ENCODE measurements at regions of chr2 and their contacts with region 1.

Region 1: DNA sequence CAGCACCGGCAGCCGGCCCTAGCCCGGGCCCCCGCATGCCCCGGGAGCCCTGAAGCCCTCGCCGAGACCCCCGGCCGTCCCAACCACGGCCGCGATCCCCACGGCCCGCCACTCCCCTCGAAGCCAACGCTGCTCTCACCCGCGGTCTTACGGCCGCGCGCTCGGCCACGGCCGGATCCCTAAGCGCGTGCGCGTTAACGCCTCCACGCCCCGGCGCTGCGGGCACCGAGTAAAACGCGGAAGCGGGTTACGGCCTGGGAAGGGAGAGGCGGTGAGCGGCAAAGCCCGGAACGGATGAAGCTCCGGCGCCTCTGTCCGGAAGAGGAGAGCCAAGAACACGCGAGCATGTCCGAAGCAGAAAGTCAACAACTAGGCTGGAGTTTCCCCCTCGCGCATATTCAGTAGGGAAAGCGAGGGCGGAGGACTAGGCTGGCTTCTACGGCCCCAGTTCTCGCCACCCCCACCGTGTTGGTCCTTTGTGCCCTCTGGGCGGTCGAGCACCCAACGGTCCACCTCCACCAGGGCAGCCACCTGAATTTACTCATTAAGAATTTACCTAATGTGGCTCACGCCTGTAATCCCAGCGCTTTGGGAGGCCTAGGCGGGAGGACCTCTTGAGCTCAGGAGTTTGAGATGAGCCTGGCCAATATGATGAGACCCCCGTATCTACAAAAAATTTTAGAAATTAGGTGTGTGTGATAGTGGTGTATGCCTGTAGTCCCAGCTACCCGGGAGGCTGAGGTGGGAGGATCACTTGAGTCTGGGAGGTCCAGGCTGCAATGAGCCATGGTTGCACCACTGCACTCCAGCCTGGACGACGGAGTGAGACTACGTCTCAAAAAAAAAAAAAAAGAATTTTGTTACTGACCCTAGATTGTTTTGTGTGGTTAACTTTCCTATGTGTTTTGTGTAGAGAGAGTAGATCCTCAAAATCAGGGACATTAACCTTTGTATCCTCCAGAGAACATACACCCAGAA is at the start of gene KANSL3:
- DNase-seq: peak; percentile 94 to 95
- ATAC-seq: peak; percentile 82 to 93 (median 87)
- H3K4me3 ChIP-seq: peak within 1 kb of the TSS; percentile 60
- H3K4me3 Mint-ChIP-seq: peak within 1 kb of the TSS; percentile 93
- H3K27ac ChIP-seq: peak within 1 kb of the TSS; percentile 89
- H3K27ac Mint-ChIP-seq: peak within 1 kb of the TSS; percentile 94 to 97
- H3K4me1 ChIP-seq: peaks cover 19% of the 10 kb centered on the region
- H3K4me1 Mint-ChIP-seq: peaks cover 33% of the 10 kb centered on the region in 2 donors
- H3K27me3 ChIP-seq: no peaks in the 10 kb centered on the region
- H3K27me3 Mint-ChIP-seq: peaks cover 0 to 3% of the 10 kb centered on the region in 2 donors
- CTCF ChIP-seq: no peak
- total RNA-seq, gene KANSL3: 73.9 to 98.0 (median 83.5) TPM

Region 2: GRCh38 chr2:96618604-96619283 is 19.7 kb before region 1 on chr2:
- intact Hi-C with region 1: loop called (anchors 1 kb)
- DNase-seq: no peak
- ATAC-seq: peak in 1 of 3 donors; percentile 52
- H3K4me3 ChIP-seq: no peak overlapping the region
- H3K4me3 Mint-ChIP-seq: no peak overlapping the region
- H3K27ac ChIP-seq: no peak overlapping the region
- H3K27ac Mint-ChIP-seq: peak overlapping the region in 1 of 2 donors; percentile 58
- H3K4me1 ChIP-seq: peaks cover 18% of the 10 kb centered on the region
- H3K4me1 Mint-ChIP-seq: peaks cover 44 to 46% of the 10 kb centered on the region in 2 donors
- H3K27me3 ChIP-seq: no peaks in the 10 kb centered on the region
- H3K27me3 Mint-ChIP-seq: no peaks in the 10 kb centered on the region
- CTCF ChIP-seq: no peak

Region 3: GRCh38 chr2:96739633-96740428 is 101.4 kb after region 1 on chr2 and contains the start of gene LMAN2L:
- intact Hi-C with region 1: loop called (anchors 1 kb)
- DNase-seq: peak; percentile 93 to 97
- ATAC-seq: peak; percentile 99 to 100 (median 100)
- H3K4me3 ChIP-seq: peak within 1 kb of the TSS; percentile 73
- H3K4me3 Mint-ChIP-seq: peak within 1 kb of the TSS; percentile 98
- H3K27ac ChIP-seq: peak within 1 kb of the TSS; percentile 57
- H3K27ac Mint-ChIP-seq: peak within 1 kb of the TSS; percentile 83 to 93
- H3K4me1 ChIP-seq: peaks cover 15% of the 10 kb centered on the region
- H3K4me1 Mint-ChIP-seq: peaks cover 18 to 30% of the 10 kb centered on the region in 2 donors
- H3K27me3 ChIP-seq: no peaks in the 10 kb centered on the region
- H3K27me3 Mint-ChIP-seq: no peaks in the 10 kb centered on the region
- CTCF ChIP-seq: no peak
- total RNA-seq, gene LMAN2L: 4.0 to 7.9 (median 5.9) TPM

Measured in natural killer cell (primary cell).